ENCODE measurements at regions of chr13 and their contacts with region 1.

Region 1: GRCh38 chr13:93824286-93824685 is 597.7 kb downstream of the GPC6 start:
- DNase-seq: peak; percentile 20

Region 2: DNA sequence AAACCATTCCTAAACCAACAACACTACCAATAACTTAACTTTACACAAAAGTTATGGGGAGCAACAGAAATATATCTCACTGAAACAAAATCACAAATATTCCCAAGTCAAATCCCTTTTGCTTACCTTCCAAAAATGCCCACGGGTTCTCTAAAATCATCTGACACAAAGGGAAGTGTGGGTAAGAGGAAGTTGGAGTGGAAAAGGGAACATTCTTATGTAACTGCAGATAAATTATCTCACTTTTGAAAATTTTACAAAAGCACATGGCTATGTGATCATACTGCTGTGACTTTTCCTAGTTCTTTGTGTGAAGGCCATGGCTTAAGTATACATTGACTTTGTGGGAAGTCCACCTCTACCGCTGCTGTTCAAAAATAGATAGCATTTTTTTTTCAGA is 247.2 kb before region 1 on chr13:
- CTCF ChIA-PET with region 1: no interaction called
- POLR2A ChIA-PET with region 1: no interaction called
- DNase-seq: no peak

Region 3: DNA sequence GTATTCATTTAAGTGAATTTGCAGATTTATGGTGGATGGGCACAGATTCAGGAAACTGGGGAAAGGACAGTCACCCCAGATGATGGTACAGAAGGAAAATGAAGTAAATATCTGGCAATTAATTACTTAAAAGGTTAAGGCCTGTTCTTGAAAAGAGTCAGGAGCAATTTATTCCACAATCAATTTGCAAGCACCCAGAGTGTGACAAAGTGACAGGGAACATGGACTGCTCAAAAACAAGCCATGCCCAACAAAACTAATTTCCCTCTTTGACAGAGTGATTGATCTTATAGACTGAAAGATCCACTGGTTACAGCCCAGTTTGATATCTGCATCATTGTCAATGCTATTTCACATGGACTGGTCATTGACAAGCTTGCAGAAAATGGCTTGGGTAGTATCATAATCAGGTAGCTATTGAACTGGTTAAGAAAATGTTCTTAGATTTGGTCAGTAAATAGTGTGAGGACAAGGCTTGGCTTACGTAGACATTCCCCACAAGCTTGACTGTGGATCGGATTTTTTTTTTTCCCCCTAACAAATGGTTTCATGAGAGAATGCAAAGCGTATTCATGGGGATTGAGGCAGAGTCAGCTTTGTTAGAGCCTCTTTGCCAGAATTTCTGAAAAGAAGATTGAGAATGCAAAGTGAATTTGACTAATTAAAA is 13.1 kb before region 1 on chr13:
- CTCF ChIA-PET with region 1: interaction called, 11 read pairs
- POLR2A ChIA-PET with region 1: no interaction called
- DNase-seq: no peak

Measured in HEK293T (cell line).